GM10248 (cell line): ENCODE measurements at regions of chr2 and their contacts with region 1.

Region 1: GRCh38 chr2:39513641-39514094 is 76.6 kb upstream of the MAP4K3 start:
- DNase-seq: peak; percentile 59
- CTCF ChIP-seq: peak; percentile 56

Region 2: GRCh38 chr2:39499336-39499735 is 14.3 kb before region 1 on chr2:
- CTCF ChIA-PET with region 1: interaction called, 22 read pairs
- POLR2A ChIA-PET with region 1: no interaction called
- DNase-seq: no peak
- CTCF ChIP-seq: no peak